Natural killer cell (primary cell): ENCODE measurements at regions of chr6 and their contacts with region 1.

Region 1: DNA sequence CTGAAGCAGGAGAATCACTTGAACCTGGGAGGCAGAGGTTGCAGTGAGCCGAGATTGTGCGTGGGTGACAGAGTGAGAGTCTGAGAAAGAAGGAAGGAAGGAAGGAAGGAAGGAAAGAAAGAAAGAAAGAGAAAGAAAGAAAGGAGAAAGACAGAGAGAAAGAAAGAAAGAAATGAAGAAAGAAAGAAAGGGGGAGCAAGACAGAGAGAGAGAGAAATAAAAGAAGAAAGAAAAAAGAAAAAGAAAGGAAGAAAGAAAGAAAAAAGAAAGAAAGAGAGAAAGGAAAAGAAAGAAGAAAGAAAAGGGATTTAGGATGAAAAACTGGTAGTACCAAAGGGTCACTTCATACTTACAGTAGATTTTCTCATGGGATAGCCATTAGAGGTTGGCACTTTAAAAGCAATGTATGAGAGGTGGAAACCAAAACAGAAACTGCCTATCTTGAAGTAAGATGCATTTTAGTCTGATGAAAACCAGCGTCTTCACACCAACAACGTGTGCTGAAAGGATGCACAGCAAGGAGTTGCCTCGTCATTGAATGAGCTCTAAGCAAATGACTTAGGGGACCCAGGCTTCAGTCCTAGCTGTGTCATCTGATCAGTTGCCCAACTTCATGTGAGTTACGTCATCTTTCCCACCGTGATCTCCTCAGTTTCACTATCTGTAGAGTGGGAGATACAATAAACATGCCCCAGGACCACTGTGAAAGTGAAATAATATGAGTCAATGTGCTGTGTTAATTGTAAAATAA is 133.9 kb upstream of the NEDD9 start:
- DNase-seq: peak; percentile 50 to 81
- ATAC-seq: peak; percentile 95 to 97 (median 97)
- H3K4me3 ChIP-seq: no peak overlapping the region
- H3K4me3 Mint-ChIP-seq: peak overlapping the region; percentile 73
- H3K27ac ChIP-seq: peak overlapping the region; percentile 55
- H3K27ac Mint-ChIP-seq: peak overlapping the region; percentile 86 to 96
- H3K4me1 ChIP-seq: peaks cover 20% of the 10 kb centered on the region
- H3K4me1 Mint-ChIP-seq: peaks cover 76 to 82% of the 10 kb centered on the region in 2 donors
- H3K27me3 ChIP-seq: no peaks in the 10 kb centered on the region
- H3K27me3 Mint-ChIP-seq: no peaks in the 10 kb centered on the region
- CTCF ChIP-seq: no peak

Region 2: GRCh38 chr6:11224252-11224965 is 141.9 kb before region 1 on chr6:
- intact Hi-C with region 1: loop called (anchors 2 kb)
- DNase-seq: peak; percentile 57 to 74
- ATAC-seq: peak; percentile 73 to 85 (median 80)
- H3K4me3 ChIP-seq: peak overlapping the region; percentile 16
- H3K4me3 Mint-ChIP-seq: peak overlapping the region; percentile 71
- H3K27ac ChIP-seq: peak overlapping the region; percentile 92
- H3K27ac Mint-ChIP-seq: peak overlapping the region; percentile 98 to 99
- H3K4me1 ChIP-seq: peaks cover 54% of the 10 kb centered on the region
- H3K4me1 Mint-ChIP-seq: peaks cover 95 to 97% of the 10 kb centered on the region in 2 donors
- H3K27me3 ChIP-seq: no peaks in the 10 kb centered on the region
- H3K27me3 Mint-ChIP-seq: no peaks in the 10 kb centered on the region
- CTCF ChIP-seq: no peak

Region 3: GRCh38 chr6:11258260-11259237 is 107.8 kb before region 1 on chr6:
- intact Hi-C with region 1: loop called (anchors 2 kb)
- DNase-seq: peak; percentile 40 to 68
- ATAC-seq: peak; percentile 71 to 87 (median 85)
- H3K4me3 ChIP-seq: no peak overlapping the region
- H3K4me3 Mint-ChIP-seq: peak overlapping the region; percentile 69
- H3K27ac ChIP-seq: peak overlapping the region; percentile 74
- H3K27ac Mint-ChIP-seq: peak overlapping the region; percentile 85 to 93
- H3K4me1 ChIP-seq: peaks cover 56% of the 10 kb centered on the region
- H3K4me1 Mint-ChIP-seq: peaks cover 87 to 92% of the 10 kb centered on the region in 2 donors
- H3K27me3 ChIP-seq: no peaks in the 10 kb centered on the region
- H3K27me3 Mint-ChIP-seq: no peaks in the 10 kb centered on the region
- CTCF ChIP-seq: no peak

Region 4: DNA sequence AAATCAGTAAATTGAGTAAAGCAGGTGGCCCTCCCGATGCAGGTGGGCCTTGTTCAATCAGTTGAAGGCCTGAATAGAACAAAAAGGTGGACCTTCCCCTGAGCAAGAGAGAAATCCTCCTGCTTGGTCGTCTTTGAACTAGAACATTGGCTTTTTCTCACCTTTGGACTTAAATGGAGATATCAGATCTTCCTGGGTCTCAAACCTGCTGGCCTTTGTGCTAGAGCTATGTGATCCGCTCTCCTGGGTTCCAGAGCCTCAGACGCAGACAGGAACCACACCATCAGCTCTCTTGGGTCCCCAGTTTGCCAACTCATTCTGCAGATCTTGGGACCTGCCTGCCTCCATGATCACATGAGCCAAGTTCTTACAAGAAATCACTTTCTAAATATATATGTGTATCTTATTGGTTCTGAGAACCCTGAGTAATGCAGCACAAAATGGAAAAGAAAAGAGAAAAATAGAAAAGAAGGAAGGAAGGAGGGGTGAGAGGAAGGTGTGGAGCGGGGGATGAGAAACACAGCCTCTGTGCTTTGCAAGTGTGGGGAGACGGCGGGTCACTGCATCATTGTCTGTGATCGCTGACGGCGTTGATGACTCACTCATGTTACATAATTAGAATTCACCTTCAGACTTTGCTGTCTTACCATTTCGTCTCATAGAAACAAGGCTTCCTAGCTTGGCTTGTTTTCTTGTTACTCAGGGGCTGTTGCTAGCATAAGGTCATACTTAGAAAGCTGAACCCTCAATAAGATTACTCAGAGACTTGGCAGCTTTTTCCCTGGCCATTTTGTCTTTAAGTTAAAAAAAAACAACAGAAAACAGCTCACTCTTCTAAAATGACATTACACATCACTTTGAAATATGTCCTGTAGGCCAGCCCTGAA is 48.2 kb before region 1 on chr6:
- intact Hi-C with region 1: loop called (anchors 5 kb)
- DNase-seq: peak; percentile 35 to 83
- ATAC-seq: peak; percentile 87 to 89 (median 88)
- H3K4me3 ChIP-seq: no peak overlapping the region
- H3K4me3 Mint-ChIP-seq: no peak overlapping the region
- H3K27ac ChIP-seq: peak overlapping the region; percentile 30
- H3K27ac Mint-ChIP-seq: peak overlapping the region; percentile 27 to 85
- H3K4me1 ChIP-seq: peaks cover 19% of the 10 kb centered on the region
- H3K4me1 Mint-ChIP-seq: peaks cover 53 to 59% of the 10 kb centered on the region in 2 donors
- H3K27me3 ChIP-seq: no peaks in the 10 kb centered on the region
- H3K27me3 Mint-ChIP-seq: no peaks in the 10 kb centered on the region
- CTCF ChIP-seq: no peak

Region 5: DNA sequence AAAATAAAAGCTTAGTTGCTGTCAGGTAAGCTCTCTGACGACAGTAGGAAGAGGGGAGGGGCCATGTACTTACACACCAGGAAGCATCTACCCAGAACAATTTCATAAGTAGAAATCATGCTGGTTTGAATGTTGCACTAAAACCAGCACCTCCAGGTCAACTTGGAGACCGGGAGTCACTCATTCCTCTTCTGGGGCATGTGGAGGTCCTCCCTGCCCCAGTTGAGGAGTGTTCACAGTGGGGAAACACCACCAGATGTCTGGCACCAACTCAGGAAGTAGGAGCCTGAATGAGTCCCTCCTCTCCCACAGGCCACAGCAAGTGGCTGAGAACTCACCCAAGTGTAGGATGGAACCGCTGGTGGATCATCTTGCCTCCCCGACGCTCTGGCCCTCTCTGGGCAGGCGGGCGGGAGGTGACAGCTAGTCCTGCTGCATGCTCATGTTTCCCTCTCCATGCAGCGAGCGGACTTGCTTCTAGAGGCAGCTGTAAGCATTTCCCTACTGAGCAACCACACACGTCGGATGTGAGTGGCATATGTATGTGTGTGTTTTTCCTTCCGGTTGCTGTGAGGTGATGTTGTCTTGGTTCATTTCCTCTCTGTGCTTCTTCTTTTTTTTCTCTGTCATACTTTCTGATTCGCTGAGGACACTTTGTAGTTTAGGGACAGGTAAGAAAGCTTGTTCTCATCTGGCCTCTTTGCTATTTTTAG is 15.6 kb after region 1 on chr6:
- intact Hi-C with region 1: loop called (anchors 1 kb)
- DNase-seq: peak; percentile 66 to 90
- ATAC-seq: peak; percentile 89 to 96 (median 93)
- H3K4me3 ChIP-seq: peak overlapping the region; percentile 77
- H3K4me3 Mint-ChIP-seq: peak overlapping the region; percentile 97
- H3K27ac ChIP-seq: peak overlapping the region; percentile 90
- H3K27ac Mint-ChIP-seq: peak overlapping the region; percentile 95 to 97
- H3K4me1 ChIP-seq: peaks cover 43% of the 10 kb centered on the region
- H3K4me1 Mint-ChIP-seq: peaks cover 52 to 59% of the 10 kb centered on the region in 2 donors
- H3K27me3 ChIP-seq: no peaks in the 10 kb centered on the region
- H3K27me3 Mint-ChIP-seq: peaks cover 0 to 8% of the 10 kb centered on the region in 2 donors
- CTCF ChIP-seq: no peak

Region 6: GRCh38 chr6:12011276-12012076 is 645.1 kb after region 1 on chr6:
- intact Hi-C with region 1: loop called (anchors 5 kb)
- DNase-seq: peak; percentile 94 to 98
- ATAC-seq: peak; percentile 68 to 90 (median 77)
- H3K4me3 ChIP-seq: peak overlapping the region; percentile 71
- H3K4me3 Mint-ChIP-seq: peak overlapping the region; percentile 96
- H3K27ac ChIP-seq: peak overlapping the region; percentile 95
- H3K27ac Mint-ChIP-seq: peak overlapping the region; percentile 98 to 99
- H3K4me1 ChIP-seq: peaks cover 21% of the 10 kb centered on the region
- H3K4me1 Mint-ChIP-seq: peaks cover 48 to 49% of the 10 kb centered on the region in 2 donors
- H3K27me3 ChIP-seq: no peaks in the 10 kb centered on the region
- H3K27me3 Mint-ChIP-seq: peaks cover 0 to 4% of the 10 kb centered on the region in 2 donors
- CTCF ChIP-seq: no peak